Heart right ventricle (tissue), 16 donors: ENCODE measurements at regions of chr16 and their contacts with region 1.

Region 1: DNA sequence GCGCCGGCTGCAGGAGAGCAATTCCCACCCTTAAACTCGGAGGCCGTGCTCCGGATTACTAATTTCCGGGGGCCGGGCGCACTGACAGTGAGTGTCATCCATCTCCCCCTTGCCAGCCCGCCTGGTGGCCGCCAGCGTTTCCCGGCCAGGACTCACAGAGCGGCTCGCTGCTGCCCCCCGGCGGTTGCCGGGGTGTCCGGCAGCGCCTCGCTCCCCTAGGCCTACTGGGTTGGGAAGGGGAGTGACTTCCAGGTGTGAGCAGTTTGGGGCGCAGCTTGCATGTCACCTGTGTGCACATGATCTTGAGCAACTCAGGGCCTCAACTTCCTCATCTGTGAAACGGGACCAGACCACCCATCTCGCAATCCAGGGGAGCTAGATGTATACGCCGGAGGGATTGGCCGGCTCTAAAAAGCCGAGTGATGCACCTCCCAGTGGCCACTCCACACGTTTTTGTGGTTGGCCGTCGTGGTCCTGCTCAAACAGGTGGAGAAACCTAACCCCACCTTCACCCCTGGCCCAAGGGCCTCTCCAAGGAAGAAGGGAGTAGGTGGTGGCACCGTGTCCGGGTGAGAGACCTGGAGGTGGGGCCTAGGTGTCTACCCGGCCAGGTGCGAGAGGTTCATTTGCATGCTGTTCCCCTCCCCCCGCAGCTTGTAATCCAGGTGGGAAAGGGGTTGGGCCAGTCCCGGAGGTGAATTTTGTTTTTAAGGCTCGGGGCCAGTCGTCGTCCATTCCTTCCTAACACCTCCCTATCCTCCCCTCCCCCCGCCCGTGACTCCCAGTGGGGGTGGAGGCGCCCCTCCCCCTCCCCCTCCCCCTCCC is 2.4 kb upstream of the GSE1 start:
- DNase-seq: peak; percentile 84 to 88
- ATAC-seq: peak; percentile 22 to 69 (median 41)
- H3K4me3 ChIP-seq: peak overlapping the region; percentile 43 to 73 (median 65)
- H3K27ac ChIP-seq: peak overlapping the region; percentile 72 to 98 (median 92)
- H3K4me1 ChIP-seq: peaks cover 27 to 70% (median 56%) of the 10 kb centered on the region in 9 donors
- H3K27me3 ChIP-seq: no peaks in the 10 kb centered on the region
- CTCF ChIP-seq: peak; percentile 98 to 100 (median 99)

Region 2: GRCh38 chr16:84511180-84511824 is 1099.4 kb before region 1 on chr16:
- intact Hi-C with region 1: no loop called
- DNase-seq: peak; percentile 83 to 85
- ATAC-seq: peak; percentile 40 to 92 (median 84)
- H3K4me3 ChIP-seq: peak overlapping the region in 2 of 10 donors; percentile 10 to 14
- H3K27ac ChIP-seq: peak overlapping the region in 1 of 10 donors; percentile 87
- H3K4me1 ChIP-seq: peaks cover 0 to 46% (median 3%) of the 10 kb centered on the region in 9 donors
- H3K27me3 ChIP-seq: no peaks in the 10 kb centered on the region
- CTCF ChIP-seq: peak; percentile 94 to 99 (median 97)

Region 3: DNA sequence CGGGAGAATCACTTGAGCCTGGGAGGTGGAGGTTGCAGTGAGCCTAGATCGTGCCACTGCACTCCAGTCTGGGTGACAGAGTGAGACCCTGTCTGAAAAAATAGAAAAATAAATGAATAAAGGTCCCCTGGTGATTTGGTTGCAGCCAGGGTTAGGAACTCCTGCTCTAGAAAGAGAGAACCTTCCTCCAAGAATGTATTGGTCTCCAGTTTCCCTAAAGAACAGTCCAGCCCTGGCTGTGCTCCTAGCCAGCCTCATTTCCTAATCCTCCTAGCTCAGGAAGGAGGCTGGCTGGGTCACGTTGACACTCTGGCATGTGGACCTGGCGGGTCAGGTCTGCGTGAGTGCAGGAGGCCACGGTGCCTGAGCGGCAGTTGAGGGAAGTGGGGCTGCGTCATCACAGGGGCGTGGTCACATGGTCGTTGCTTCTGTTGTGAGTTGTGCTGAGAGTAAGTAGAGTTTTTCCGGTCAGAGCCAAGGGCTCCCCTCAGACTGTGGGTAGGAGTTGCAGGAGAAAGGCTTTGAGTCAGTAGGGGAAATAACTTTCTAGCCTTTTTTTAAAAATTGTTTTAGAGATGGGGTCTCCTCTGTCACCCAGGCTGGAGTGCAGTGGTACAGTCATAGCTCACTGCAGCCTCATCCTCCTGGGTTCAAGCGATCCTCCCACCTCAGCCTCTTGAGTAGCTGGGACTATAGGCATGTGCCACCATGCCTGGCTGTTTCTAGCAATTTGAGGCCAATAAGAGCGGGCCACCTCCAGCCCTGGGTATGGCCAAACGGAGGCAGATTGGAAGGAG is 304.5 kb before region 1 on chr16:
- intact Hi-C with region 1: loop called in 4 of 10 experiments (anchors 5 to 10 kb)
- DNase-seq: peak; percentile 79 to 87
- ATAC-seq: peak; percentile 15 to 85 (median 64)
- H3K4me3 ChIP-seq: no peak overlapping the region
- H3K27ac ChIP-seq: peak overlapping the region in 8 of 10 donors; percentile 16 to 66 (median 42)
- H3K4me1 ChIP-seq: peaks cover 11 to 82% (median 72%) of the 10 kb centered on the region in 9 donors
- H3K27me3 ChIP-seq: peaks cover 0 to 5% (median 0%) of the 10 kb centered on the region in 7 donors
- CTCF ChIP-seq: no peak

Region 4: GRCh38 chr16:85369741-85370528 is 240.8 kb before region 1 on chr16:
- intact Hi-C with region 1: loop called in 1 of 10 experiments (anchors 5 kb)
- DNase-seq: peak; percentile 32 to 56
- ATAC-seq: peak; percentile 21 to 72 (median 54)
- H3K4me3 ChIP-seq: no peak overlapping the region
- H3K27ac ChIP-seq: no peak overlapping the region
- H3K4me1 ChIP-seq: peaks cover 5 to 34% (median 22%) of the 10 kb centered on the region in 9 donors
- H3K27me3 ChIP-seq: no peaks in the 10 kb centered on the region
- CTCF ChIP-seq: peak; percentile 53 to 83 (median 76)

Region 5: GRCh38 chr16:85420501-85421337 is 190.0 kb before region 1 on chr16:
- intact Hi-C with region 1: loop called (anchors 1 to 10 kb)
- DNase-seq: peak; percentile 16 to 72
- ATAC-seq: peak; percentile 42 to 81 (median 61)
- H3K4me3 ChIP-seq: no peak overlapping the region
- H3K27ac ChIP-seq: no peak overlapping the region
- H3K4me1 ChIP-seq: peaks cover 3 to 18% (median 7%) of the 10 kb centered on the region in 9 donors
- H3K27me3 ChIP-seq: no peaks in the 10 kb centered on the region
- CTCF ChIP-seq: peak; percentile 99 to 100 (median 100)

Region 6: GRCh38 chr16:85554112-85554813 is 56.5 kb before region 1 on chr16:
- intact Hi-C with region 1: loop called in 8 of 10 experiments (anchors 2 to 5 kb)
- DNase-seq: peak; percentile 53 to 82
- ATAC-seq: peak; percentile 13 to 67 (median 54)
- H3K4me3 ChIP-seq: peak overlapping the region; percentile 59 to 86 (median 77)
- H3K27ac ChIP-seq: peak overlapping the region; percentile 77 to 96 (median 94)
- H3K4me1 ChIP-seq: peaks cover 4 to 53% (median 41%) of the 10 kb centered on the region in 9 donors
- H3K27me3 ChIP-seq: no peaks in the 10 kb centered on the region
- CTCF ChIP-seq: no peak

Region 7: DNA sequence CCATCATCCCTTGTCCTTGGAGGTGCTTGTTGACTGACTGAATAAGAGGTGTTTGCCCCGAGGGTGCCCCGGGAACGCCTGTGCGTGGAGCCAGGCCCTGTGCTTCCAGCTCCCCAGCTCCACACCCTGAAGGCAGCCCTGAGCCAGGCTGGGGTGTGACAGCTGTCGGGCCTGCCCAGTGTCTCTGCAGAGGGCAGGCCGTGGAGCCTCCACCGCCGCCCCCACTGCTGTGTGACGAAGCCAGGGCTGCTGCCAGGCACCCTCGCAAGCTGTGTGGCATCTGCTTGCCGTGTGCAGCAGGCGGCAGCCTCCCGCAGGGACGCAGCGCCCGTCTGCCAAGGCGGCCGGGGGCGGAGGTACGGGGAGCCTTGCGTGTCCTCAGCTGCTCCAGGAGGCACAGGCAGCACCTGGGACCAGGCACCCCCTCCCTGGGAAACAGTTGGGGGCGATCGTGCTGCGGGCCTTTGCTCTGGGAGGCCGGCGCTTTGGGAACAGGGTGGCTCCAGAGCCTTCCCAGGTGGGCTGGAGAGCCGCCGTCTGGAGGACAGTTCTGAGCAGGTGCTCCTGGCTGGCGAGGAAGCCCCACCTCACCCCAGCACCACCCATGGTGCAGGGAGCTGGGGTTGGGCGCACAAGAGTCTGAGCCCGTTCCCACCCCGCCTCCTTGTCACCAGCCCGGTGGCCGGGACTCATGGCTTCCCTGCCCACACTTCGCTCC is 29.0 kb after region 1 on chr16:
- intact Hi-C with region 1: no loop called
- DNase-seq: peak; percentile 73 to 80
- ATAC-seq: peak; percentile 64 to 90 (median 84)
- H3K4me3 ChIP-seq: no peak overlapping the region
- H3K27ac ChIP-seq: peak overlapping the region in 7 of 10 donors; percentile 30 to 76 (median 56)
- H3K4me1 ChIP-seq: peaks cover 8 to 74% (median 44%) of the 10 kb centered on the region in 9 donors
- H3K27me3 ChIP-seq: no peaks in the 10 kb centered on the region
- CTCF ChIP-seq: peak in 3 of 9 donors; percentile 32 to 37 (median 35)

Region 8: DNA sequence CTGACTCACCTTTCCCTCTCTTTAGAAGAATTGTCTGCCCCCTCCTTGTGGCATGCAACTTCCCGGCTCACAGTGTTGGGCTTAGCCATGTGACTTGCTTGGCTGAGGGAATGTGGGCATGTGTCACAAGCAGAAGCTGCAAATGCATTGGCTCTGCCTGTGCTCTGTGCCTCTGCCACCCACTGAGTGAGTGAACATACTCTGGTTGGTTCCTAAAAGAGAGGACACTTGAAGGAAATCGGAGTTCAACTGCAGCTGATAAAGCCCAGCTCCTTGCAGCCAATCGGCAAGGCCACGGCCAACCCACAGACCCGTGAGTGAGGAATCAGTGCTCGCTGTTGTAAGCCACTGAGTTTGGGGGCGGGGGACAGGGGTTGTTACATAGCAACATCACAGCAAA is 88.9 kb after region 1 on chr16:
- intact Hi-C with region 1: no loop called
- DNase-seq: no peak
- ATAC-seq: peak; percentile 46 to 90 (median 82)
- H3K4me3 ChIP-seq: no peak overlapping the region
- H3K27ac ChIP-seq: no peak overlapping the region
- H3K4me1 ChIP-seq: peaks cover 0 to 4% (median 0%) of the 10 kb centered on the region in 9 donors
- H3K27me3 ChIP-seq: peaks cover 0 to 39% (median 29%) of the 10 kb centered on the region in 7 donors
- CTCF ChIP-seq: no peak

Region 9: DNA sequence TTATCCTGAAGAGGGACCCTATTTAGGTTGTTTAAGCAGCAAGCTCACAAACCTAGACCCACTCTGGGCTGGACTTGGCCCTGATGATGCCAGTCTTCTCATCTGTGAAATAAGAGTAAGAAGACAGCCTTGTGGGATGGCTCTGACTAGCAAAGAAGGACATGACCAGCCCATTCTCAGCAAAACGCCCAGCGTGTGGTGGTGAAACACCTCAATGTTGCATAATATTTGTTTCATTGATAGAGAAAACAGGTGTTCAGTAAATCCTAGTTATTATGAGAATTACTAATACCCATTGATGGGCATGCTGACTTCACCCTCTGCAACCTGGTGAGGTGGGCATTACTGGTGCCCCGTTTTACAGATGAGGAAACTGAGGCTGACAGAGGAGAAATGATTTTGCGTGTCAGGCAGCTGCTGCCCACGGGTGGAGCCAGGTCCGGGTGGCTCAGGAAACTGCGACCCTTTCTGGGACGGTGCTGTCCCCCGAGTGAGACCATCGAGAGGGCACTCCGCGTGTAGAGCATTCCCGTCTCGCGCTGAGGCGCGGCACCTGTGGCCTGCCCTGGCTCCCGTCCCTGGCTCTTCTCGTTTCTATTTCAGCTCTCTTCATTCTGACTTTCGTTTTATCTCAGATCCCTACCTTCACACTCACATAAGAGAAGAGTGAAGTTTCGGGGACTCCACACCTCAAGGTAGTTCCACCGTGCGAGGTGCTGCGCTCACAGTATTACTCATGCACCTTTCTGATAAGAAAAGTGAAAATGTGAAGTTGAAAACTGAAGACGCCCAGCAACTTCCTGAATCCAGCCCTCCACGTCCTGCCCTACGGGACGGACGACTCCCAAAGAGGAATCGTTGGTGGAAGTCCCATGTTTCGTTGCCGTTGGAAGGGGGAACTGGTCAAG is 336.8 kb after region 1 on chr16:
- intact Hi-C with region 1: no loop called
- DNase-seq: no peak
- ATAC-seq: no peak
- H3K4me3 ChIP-seq: peak overlapping the region in 4 of 10 donors; percentile 3 to 35 (median 11)
- H3K27ac ChIP-seq: no peak overlapping the region
- H3K4me1 ChIP-seq: peaks cover 0 to 10% (median 0%) of the 10 kb centered on the region in 9 donors
- H3K27me3 ChIP-seq: peaks cover 0 to 63% (median 36%) of the 10 kb centered on the region in 7 donors
- CTCF ChIP-seq: no peak